Dendritic cell treated with granulocyte-macrophage colony-stimulating factor and Interleukin-4, amounts not matched to agents 40 ng/mL and 50 ng/mL, for 4 days (primary cell): ENCODE measurements at regions of chr19 and their contacts with region 1.

Region 1: DNA sequence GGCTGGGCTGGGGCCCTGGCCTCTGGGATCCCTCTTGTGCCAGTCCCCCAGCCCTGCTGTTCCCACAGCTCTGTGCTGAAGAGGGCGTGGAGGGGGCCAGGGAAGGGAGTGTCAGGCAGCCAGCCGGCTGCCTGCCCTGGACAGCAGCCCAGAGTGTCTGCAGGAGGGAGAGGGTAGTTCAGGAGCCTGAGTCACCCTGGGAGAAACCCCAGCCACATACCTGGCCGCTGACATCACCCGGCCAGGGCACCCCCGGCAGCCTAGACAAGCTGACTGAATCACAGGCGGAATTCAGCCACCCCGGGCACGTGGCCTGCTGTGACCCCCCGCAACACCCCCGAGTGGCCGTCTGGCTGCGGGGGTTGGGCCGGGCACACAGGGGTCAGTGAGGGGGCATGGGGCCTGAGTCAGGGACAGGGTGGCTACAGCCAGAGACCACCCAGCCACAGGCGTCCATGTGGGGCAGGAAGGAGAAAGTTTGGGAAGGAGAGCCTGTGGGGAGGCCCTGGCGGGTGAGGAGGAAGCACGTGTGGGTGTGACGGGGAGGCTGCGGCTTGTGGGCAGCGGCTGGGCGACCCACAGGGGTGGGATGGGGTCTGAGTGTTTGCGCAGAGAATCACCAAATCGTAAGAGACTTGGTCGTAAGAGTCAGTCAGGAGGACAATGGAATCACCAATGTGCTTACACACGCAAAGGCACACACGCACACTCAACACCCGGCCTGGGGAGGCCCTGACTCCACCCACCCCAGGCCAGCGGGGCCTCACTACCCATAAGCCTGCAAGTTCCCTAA is 11.9 kb upstream of the FOSB start:
- H3K4me3 Mint-ChIP-seq: peak overlapping the region; percentile 58
- H3K27ac Mint-ChIP-seq: peak overlapping the region; percentile 95
- H3K4me1 Mint-ChIP-seq: peaks cover 51% of the 10 kb centered on the region
- H3K27me3 Mint-ChIP-seq: peaks cover 20% of the 10 kb centered on the region

Region 2: DNA sequence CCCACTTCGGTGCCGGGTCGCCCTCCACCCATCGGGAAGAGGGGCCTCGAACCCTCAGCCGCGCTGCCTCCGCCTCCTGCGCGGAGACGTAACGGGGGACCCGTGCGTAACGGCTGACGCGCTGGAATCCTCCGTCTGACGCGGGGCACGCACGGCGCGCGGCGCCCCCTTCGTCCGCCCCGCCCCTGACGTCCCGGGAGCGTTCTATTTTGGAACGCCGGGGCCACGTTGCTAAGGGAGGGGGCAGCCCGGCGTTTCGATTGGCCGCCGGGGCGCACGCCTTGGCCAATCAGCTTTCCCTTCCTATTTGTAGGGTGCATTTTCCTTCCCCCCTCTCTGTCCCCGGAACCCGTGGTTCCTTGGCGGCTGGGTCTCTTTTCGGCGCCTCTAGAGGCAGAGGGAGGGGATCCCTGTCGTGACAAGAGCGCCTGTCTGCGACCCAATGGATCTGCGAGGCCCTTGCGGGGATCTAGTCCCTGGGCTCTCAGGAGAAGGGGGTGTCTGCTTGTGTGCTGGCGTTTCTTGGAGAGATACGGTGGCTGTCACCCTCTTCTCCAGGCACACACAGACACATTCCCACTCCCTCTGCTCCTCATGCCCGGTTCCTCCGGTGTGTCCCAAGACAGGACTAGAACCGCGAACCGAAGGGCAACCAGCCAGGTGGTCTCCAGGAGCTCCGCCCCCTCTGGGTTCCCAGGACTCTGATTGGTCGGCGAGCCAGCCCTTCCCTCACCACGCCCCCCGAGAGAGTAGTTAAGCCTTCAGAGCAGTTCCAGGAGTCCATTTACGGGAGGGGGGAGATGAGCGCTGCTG is 13.4 kb after region 1 on chr19:
- intact Hi-C with region 1: loop called (anchors 1 kb)
- H3K4me3 Mint-ChIP-seq: peak overlapping the region; percentile 93
- H3K27ac Mint-ChIP-seq: peak overlapping the region; percentile 97
- H3K4me1 Mint-ChIP-seq: peaks cover 80% of the 10 kb centered on the region
- H3K27me3 Mint-ChIP-seq: peaks cover 65% of the 10 kb centered on the region